Head of caudate nucleus (tissue), 42 donors: ENCODE measurements at regions of chr6 and their contacts with region 1.

Region 1: DNA sequence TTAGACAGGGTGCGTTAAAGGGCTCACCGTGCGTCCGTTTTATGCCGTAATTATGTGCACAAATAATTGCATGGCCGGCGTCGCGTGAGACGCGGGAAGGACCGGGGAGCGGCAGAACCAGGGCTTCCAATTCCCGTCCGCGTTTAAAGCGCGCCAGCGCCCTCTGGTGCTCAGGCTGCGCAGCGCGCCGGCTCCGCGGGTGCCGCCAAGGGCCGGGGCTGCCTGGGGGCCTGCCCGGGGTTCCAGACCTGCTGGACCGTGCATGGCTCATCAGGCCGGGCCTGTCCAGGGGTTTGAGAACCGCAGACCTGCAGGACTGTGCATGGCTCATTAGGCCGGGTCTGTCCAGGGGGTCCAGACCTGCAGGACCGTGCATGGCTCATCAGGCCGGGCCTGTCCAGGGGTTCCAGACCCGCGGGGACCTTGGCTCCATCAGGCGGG is 369.0 kb downstream of the THBS2 start:
- DNase-seq: peak; percentile 21 to 91 (median 76)

Region 2: GRCh38 chr6:168157272-168158007 is 727.2 kb before region 1 on chr6:
- intact Hi-C with region 1: loop called (anchors 10 kb)
- DNase-seq: peak in 2 of 42 donors; percentile 14 to 39

Region 3: GRCh38 chr6:168370310-168370991 is 514.2 kb before region 1 on chr6:
- intact Hi-C with region 1: loop called (anchors 5 kb)
- DNase-seq: peak; percentile 45 to 90 (median 78)

Region 4: DNA sequence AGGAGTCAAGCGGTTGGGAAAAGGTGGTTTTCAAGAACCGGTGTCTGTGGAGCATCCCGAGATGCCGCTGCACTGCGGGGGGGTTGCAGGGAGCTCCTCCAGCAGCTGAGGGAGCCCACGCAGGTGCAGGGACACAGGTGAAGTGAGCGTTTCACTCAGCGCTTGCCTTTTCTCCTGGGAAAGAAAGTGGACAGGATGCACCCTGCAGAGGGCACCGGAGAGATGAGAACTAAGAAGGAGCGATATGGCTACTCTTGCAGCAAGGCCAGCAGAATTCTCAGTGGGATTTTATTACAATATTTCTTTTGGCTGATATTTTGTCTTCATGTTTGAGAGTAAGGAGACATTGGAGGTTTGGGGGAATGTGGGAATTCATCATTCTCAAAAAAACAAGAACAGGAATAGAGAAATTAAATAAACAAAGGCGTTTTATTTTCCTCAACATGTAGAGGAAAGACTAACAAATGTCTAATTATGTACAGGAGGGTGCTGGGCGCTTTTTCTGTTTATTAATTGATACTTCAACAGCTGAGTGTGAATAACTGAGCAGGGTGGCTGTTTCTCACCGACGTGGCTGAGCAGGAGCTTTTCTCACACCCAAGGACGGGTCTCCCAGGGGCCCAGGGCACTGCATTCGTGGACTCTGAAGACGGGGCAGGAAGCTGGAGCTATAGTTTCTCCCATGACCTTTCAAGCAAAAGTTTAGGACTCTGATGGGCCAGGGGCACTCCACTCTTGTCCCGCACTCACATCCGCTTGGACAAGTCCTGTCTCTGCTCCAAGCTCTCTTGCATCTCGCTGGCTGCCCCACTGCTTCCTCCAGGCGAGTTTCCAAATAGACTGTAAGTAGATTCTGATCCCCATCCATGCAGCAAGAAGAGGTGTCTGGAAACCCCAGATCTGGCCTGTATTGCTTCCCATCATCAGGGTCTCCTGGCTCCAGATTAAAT is 267.6 kb before region 1 on chr6:
- intact Hi-C with region 1: loop called (anchors 10 kb)
- DNase-seq: peak in 36 of 42 donors; percentile 12 to 75 (median 46)

Region 5: GRCh38 chr6:168826726-168827585 is 57.7 kb before region 1 on chr6:
- intact Hi-C with region 1: no loop called
- DNase-seq: no peak